Transverse colon (tissue), 4 donors: ENCODE measurements at regions of chr11 and their contacts with region 1.

Region 1: DNA sequence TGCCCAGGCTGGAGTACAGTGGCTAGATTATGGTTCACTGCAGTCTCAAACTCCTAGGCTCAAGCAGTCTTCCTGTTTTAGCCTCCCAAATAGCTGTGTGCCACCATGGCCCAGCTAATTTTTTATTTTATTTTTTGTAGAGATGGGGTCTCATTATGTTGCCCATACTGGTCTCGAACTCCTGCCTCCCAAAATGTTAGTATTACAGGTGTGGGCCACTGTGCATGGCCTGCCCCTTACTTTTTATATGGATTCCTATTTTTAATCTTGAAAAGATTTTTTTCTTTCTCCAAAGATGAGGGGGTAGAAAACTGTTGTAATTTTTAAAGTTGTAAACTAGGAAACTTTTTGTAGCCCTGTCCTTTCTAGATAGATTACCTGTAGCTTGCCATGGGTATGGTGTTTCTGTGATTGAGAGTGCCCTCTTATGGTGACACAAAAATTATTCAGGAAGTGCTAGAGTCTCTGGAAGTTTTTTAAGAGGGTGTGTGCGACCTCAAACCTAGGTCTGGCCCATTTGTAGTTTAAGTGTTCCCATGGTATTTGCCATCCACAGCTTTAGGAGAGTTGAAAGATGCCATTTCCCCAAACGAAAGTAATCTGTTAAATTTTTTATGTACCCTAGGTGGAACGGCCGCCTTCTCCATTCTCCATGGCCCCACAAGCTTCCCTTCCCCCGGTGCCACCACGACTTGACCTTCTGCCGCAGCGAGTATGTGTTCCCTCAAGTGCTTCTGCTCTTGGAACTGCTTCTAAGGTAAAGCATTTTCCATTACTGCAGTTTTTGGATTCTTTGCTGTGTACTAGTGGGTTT is 32.4 kb downstream of the MCAM start:
- DNase-seq: no peak
- H3K4me3 ChIP-seq: no peak overlapping the region
- H3K27ac ChIP-seq: no peak overlapping the region
- H3K4me1 ChIP-seq: peaks cover 0 to 8% (median 2%) of the 10 kb centered on the region in 4 donors
- H3K27me3 ChIP-seq: no peaks in the 10 kb centered on the region
- CTCF ChIP-seq: peak; percentile 25 to 40 (median 37)
- EP300 ChIP-seq: no peak
- POLR2A ChIP-seq: no peak

Region 2: DNA sequence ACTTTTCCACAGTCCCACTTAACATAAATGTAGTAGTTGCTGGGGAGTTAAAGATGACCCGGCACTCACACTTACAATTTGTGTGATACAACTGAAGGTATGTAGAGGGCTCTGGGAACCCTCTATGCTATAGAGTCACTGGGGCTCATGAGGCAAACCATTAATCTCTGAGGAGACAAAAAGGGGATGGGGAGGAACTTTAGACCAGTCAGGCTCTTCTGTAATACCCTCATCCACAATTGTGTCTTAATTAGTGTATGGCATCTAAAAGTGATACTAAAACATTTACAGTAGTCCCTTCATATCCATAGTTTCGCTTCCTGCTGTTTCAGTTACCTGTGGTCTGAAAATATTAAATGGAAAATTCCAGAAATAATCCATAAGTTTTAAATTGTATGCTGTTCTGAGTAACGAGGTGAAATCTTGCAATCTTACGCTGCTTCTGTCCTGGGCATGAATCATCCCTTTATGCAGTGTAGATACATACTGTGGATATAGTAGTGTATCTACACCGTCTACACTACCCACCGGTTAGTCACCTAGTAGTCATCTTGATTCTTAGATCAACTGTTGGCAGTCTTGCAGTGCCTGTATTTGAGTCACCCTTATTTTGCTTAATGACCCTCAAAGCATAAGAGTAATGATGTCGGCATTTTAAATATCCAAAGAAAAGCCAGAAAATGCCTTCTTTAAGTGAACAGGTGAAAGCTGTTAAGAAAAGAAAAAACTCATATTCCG is 66.2 kb before region 1 on chr11:
- in situ Hi-C with region 1: no loop called
- intact Hi-C with region 1: loop called (anchors 10 kb)
- DNase-seq: no peak
- H3K4me3 ChIP-seq: no peak overlapping the region
- H3K27ac ChIP-seq: no peak overlapping the region
- H3K4me1 ChIP-seq: peaks cover 0 to 13% (median 7%) of the 10 kb centered on the region in 4 donors
- H3K27me3 ChIP-seq: no peaks in the 10 kb centered on the region
- CTCF ChIP-seq: no peak
- EP300 ChIP-seq: no peak
- POLR2A ChIP-seq: no peak

Region 3: DNA sequence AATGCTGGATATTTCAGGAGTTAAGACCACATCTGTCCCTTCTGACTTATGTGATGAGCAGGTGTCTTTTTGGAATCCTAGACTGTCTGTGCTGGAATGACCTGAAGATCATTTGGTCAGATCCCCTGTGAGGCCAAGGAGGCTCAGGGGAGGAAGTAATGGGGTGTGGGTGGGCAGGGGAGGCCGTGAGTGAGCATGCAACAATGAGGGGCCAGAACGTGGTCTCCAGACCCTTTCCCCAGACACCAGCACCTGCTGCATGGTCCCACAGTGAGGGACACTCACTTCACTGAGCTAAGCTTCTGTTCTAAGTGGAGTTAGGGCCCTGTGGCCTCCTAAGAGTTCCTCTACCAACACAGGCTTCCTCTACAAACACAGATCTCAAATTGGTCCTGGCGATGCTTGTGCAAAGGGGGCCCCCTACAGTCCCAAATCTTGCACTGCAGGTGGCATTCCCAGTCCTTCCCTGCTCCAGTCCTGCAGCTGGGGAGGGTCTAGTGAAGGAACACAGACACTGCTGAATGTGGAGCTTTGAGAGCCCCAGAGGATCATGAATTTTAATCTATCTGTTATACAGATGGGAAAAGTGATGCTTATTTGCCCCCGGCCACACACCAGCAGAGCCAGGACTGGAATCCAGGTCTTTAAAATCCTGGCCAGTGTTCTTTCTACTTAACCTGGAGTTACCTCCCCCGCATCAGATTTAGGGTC is 89.5 kb after region 1 on chr11:
- in situ Hi-C with region 1: no loop called
- intact Hi-C with region 1: no loop called
- DNase-seq: peak; percentile 84
- H3K4me3 ChIP-seq: no peak overlapping the region
- H3K27ac ChIP-seq: peak overlapping the region in 2 of 4 donors; percentile 61 to 66
- H3K4me1 ChIP-seq: peaks cover 11 to 43% (median 28%) of the 10 kb centered on the region in 4 donors
- H3K27me3 ChIP-seq: no peaks in the 10 kb centered on the region
- CTCF ChIP-seq: peak; percentile 81 to 94 (median 92)
- EP300 ChIP-seq: no peak
- POLR2A ChIP-seq: no peak